Posterior vena cava (tissue), 2 donors: ENCODE measurements at regions of chr4 and their contacts with region 1.

Region 1: DNA sequence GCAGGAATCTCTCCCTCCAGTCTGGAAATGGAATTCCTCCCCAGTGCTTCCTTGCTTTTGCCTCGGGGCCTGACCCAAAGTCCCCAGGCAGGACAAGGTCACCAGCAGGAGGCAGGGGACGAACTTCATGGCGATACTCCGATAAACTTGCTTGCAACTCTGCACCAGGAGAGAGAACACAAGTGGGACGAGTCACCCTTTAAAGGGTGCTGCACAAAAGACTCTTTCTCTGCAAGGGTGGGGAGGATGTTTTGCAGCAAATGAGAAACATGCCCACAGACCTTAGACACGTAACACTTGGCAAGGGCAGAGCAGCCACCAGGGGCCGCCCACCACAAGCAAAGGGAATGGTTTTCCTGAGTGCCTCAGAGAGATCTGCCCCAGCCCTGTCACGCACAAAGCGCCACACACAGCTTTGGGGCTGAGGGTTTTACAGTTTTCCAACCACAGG is at the start of gene FGFBP2:
- DNase-seq: no peak
- total RNA-seq, gene FGFBP2: 0.52 to 1.8 TPM

Region 2: DNA sequence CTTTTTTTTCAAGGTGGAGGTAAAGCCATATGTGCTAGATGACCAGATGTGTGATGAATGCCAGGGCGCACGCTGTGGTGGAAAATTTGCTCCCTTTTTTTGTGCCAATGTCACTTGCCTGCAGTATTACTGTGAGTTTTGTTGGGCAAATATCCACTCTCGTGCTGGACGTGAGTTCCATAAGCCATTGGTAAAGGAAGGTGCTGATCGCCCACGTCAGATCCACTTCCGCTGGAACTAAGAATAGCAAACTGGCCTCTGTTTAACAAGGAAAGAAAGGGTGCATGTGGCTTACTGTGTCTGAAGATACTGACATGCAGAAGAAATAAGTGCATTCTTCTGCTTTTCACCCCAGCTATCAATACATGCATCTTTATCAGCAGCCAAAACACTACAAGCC is 896.9 kb before region 1 on chr4:
- intact Hi-C with region 1: no loop called
- DNase-seq: no peak

Region 3: DNA sequence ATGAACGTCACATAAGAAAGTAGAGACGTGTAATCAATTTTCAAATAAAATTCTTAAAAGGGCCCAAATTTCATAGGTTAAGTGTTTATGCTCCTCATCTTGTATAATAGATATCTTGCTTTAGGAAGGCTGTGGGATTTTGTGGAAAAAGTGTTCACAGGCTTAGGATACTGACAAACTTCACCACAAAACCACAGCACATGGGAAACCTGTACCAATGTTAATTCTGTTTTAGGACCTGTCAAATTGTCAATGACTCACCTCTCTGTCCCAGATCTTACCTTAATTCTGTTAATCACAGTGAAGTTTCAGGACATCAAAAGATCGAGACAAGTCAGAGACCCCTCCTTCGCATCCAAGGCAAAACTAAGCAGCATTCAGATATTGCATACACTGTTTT is 48.7 kb before region 1 on chr4:
- intact Hi-C with region 1: loop called in 1 of 2 experiments (anchors 1 kb)
- DNase-seq: no peak